ENCODE measurements at regions of chr7 and their contacts with region 1.

Region 1: GRCh38 chr7:27994639-27995038 is 186.0 kb downstream of the JAZF1 start:
- DNase-seq: peak; percentile 22
- ATAC-seq: peak; percentile 27; the same call in 1 of the 2 replicates
- H3K4me3 ChIP-seq: no peak overlapping the region
- H3K27ac ChIP-seq: no peak overlapping the region
- H3K4me1 ChIP-seq: peaks cover 3% of the 10 kb centered on the region
- H3K27me3 ChIP-seq: no peaks in the 10 kb centered on the region
- CTCF ChIP-seq: no peak
- POLR2A ChIP-seq: no peak
- RAD21 ChIP-seq: no peak

Region 2: DNA sequence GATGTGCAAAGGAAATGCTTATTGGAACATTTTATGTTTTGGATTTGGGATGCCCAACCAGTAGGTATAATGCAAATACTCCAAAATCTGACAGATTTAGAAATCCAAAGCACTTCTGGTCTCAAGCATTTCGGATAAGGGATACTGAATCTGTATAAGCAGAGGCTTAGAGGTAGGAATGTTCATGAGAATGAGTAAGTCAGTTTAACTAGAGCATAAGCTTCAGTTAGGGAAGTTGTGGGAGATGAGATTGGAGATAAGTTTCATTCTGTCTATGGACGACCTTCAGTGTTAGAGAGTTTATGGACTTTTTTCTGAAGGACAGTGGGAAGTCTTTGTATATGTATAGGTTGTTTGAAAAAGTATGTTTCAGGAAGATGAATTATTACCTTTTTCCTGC is 244.3 kb before region 1 on chr7:
- CTCF ChIA-PET with region 1: no interaction called
- POLR2A ChIA-PET with region 1: no interaction called
- dilution Hi-C with region 1: no loop called
- in situ Hi-C with region 1: no loop called
- intact Hi-C with region 1: no loop called
- DNase-seq: no peak
- ATAC-seq: peak; percentile 42; the same call in 1 of the 2 replicates
- H3K4me3 ChIP-seq: no peak overlapping the region
- H3K27ac ChIP-seq: no peak overlapping the region
- H3K4me1 ChIP-seq: peaks cover 6% of the 10 kb centered on the region; the same call in 1 of the 2 replicates
- H3K27me3 ChIP-seq: no peaks in the 10 kb centered on the region
- CTCF ChIP-seq: no peak
- POLR2A ChIP-seq: no peak
- RAD21 ChIP-seq: no peak

Region 3: DNA sequence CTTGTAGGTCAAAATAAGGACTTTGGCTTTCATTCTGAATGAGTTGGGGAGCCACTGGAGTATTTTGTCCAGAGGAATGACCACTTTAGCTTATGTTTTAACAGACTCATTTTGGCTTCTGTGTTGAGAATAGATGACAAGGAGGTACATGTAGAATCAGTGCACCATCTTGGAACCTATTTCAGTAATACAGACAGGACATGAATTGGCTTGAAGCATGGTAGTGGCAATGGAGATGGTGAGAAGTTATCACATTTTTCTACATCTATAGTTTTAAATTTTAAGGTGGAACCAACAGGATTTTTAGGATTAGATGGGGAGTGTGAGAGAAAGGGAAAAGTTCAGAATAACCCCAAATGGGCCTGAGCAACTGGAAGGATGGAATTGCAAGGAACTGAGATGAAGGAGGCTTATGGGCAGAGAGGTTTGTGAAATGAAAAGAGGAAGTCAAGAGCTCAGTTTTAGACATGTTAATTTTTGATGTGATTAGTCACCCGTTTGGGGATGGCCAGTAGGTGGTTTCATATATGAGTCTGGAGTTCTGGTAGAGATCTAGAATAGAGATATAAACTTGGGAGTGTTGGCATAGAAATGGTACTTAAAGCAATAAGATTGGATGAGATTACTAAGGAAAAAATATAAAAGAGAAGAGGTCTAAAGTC is 275.2 kb after region 1 on chr7:
- CTCF ChIA-PET with region 1: no interaction called
- POLR2A ChIA-PET with region 1: no interaction called
- dilution Hi-C with region 1: no loop called
- in situ Hi-C with region 1: no loop called
- intact Hi-C with region 1: no loop called
- DNase-seq: no peak
- ATAC-seq: no peak
- H3K4me3 ChIP-seq: no peak overlapping the region
- H3K27ac ChIP-seq: no peak overlapping the region
- H3K4me1 ChIP-seq: no peaks in the 10 kb centered on the region
- H3K27me3 ChIP-seq: no peaks in the 10 kb centered on the region; the same call in 1 of the 2 replicates
- CTCF ChIP-seq: no peak
- POLR2A ChIP-seq: no peak
- RAD21 ChIP-seq: no peak

Region 4: DNA sequence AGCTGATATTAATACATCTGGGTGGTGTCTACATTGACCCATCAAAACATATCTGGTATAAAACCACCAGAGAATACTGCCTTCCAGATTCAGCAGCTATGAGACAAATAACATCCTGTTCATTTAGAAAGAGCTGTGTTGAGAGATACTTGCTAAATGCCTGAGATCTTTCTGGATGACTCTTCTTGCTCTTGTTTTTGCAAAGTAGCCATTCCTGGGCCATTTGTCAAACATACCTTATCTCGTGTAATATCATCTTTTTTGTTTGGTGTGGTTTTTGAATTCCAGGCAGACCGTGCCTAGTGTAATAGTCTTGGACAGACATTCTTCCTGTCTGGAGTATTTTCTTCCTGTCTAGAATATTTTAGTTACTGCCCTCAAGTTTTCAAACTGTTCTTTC is 1494.3 kb after region 1 on chr7:
- CTCF ChIA-PET with region 1: no interaction called
- POLR2A ChIA-PET with region 1: no interaction called
- dilution Hi-C with region 1: no loop called
- in situ Hi-C with region 1: no loop called
- intact Hi-C with region 1: loop called (anchors 10 kb)
- DNase-seq: peak; percentile 24
- ATAC-seq: no peak; the same call in 1 of the 2 replicates
- H3K4me3 ChIP-seq: no peak overlapping the region
- H3K27ac ChIP-seq: no peak overlapping the region
- H3K4me1 ChIP-seq: no peaks in the 10 kb centered on the region
- H3K27me3 ChIP-seq: no peaks in the 10 kb centered on the region
- CTCF ChIP-seq: no peak
- POLR2A ChIP-seq: no peak
- RAD21 ChIP-seq: no peak